CD4-positive, alpha-beta T cell (primary cell): ENCODE measurements at regions of chr19 and their contacts with region 1.

Region 1: GRCh38 chr19:57350877-57351805 is at the start of gene ZNF304:
- DNase-seq: peak; percentile 63 to 93 (median 76)
- ATAC-seq: peak; percentile 99
- H3K4me3 ChIP-seq: peak within 1 kb of the TSS; percentile 97
- H3K4me3 Mint-ChIP-seq: peak within 1 kb of the TSS; percentile 93
- H3K27ac ChIP-seq: peak within 1 kb of the TSS in 1 of 2 donors; percentile 80
- H3K27ac Mint-ChIP-seq: peak within 1 kb of the TSS; percentile 90
- H3K4me1 ChIP-seq: peaks cover 18% of the 10 kb centered on the region
- H3K4me1 Mint-ChIP-seq: peaks cover 35% of the 10 kb centered on the region
- H3K27me3 ChIP-seq: no peaks in the 10 kb centered on the region
- H3K27me3 Mint-ChIP-seq: peaks cover 9% of the 10 kb centered on the region
- CTCF ChIP-seq: no peak
- total RNA-seq, gene ZNF304: 4.9 to 5.4 TPM

Region 2: DNA sequence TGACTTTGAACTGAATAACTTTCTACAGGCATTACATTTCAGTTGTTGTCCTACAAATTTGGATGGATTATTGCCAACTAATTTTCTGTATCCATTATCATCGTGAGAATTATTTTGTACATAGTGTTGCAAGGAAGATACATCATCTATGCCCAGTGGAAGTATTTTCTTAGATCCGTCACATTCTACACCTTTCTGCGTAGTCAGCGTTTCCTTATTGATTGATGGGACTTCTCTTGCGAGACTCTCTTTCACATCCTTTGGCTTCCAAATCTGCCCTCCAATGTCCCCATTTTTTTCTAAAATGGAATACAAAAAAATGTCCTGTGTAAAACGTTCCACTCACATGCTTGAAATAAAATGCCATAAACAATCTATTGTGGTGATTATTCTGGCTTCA is 215.3 kb before region 1 on chr19:
- CTCF ChIA-PET with region 1: no interaction called
- POLR2A ChIA-PET with region 1: no interaction called
- intact Hi-C with region 1: no loop called
- DNase-seq: no peak
- ATAC-seq: no peak
- H3K4me3 ChIP-seq: no peak overlapping the region
- H3K4me3 Mint-ChIP-seq: no peak overlapping the region
- H3K27ac ChIP-seq: no peak overlapping the region
- H3K27ac Mint-ChIP-seq: no peak overlapping the region
- H3K4me1 ChIP-seq: no peaks in the 10 kb centered on the region
- H3K4me1 Mint-ChIP-seq: no peaks in the 10 kb centered on the region
- H3K27me3 ChIP-seq: no peaks in the 10 kb centered on the region
- H3K27me3 Mint-ChIP-seq: no peaks in the 10 kb centered on the region
- CTCF ChIP-seq: no peak

Region 3: GRCh38 chr19:57171551-57172081 is 179.5 kb before region 1 on chr19:
- CTCF ChIA-PET with region 1: no interaction called
- POLR2A ChIA-PET with region 1: no interaction called
- intact Hi-C with region 1: no loop called
- DNase-seq: peak in 10 of 14 experiments; percentile 11 to 66 (median 34)
- ATAC-seq: peak; percentile 73
- H3K4me3 ChIP-seq: peak overlapping the region; percentile 46
- H3K4me3 Mint-ChIP-seq: peak overlapping the region; percentile 78
- H3K27ac ChIP-seq: no peak overlapping the region
- H3K27ac Mint-ChIP-seq: peak overlapping the region; percentile 27
- H3K4me1 ChIP-seq: peaks cover 12% of the 10 kb centered on the region
- H3K4me1 Mint-ChIP-seq: peaks cover 14% of the 10 kb centered on the region
- H3K27me3 ChIP-seq: peaks cover 4 to 12% of the 10 kb centered on the region in 2 experiments
- H3K27me3 Mint-ChIP-seq: peaks cover 36% of the 10 kb centered on the region
- CTCF ChIP-seq: no peak

Region 4: DNA sequence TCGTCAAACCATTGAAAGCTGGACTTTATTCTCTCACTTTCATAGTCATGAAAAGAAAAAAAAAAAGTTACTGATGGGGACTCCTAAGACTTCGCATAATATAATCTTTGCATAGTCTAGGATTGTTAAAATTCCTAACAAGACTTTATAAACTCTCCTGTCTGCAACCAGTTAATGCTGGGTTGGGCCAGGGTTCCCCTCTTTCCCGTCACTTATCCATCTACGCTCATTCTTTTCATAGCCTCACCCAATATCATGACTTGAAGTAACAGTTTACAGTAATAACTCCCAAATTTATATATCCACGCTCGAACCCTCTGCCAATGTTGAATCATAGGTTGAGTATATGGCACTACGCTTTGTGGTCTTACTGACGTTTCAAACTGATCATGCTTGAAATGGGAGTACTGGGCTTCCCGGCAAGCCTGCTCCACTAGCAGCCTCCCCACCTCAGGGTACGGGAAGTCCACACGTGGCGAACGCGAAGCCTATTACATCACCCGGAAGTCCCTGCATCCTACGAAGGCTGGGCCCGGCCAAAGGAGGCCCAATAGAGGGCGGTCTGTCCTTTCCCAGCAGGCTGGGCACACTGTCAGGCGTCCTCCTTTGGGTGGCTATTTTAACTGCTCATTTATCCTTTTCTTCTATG is 71.6 kb before region 1 on chr19:
- CTCF ChIA-PET with region 1: no interaction called
- POLR2A ChIA-PET with region 1: no interaction called
- intact Hi-C with region 1: loop called (anchors 2 to 5 kb)
- DNase-seq: peak; percentile 59 to 93 (median 70)
- ATAC-seq: peak; percentile 66
- H3K4me3 ChIP-seq: peak overlapping the region; percentile 76
- H3K4me3 Mint-ChIP-seq: no peak overlapping the region
- H3K27ac ChIP-seq: peak overlapping the region; percentile 95 to 100
- H3K27ac Mint-ChIP-seq: no peak overlapping the region
- H3K4me1 ChIP-seq: peaks cover 42% of the 10 kb centered on the region
- H3K4me1 Mint-ChIP-seq: peaks cover 27% of the 10 kb centered on the region
- H3K27me3 ChIP-seq: no peaks in the 10 kb centered on the region
- H3K27me3 Mint-ChIP-seq: no peaks in the 10 kb centered on the region
- CTCF ChIP-seq: no peak

Region 5: GRCh38 chr19:57338877-57339276 is 12.3 kb before region 1 on chr19:
- CTCF ChIA-PET with region 1: no interaction called
- POLR2A ChIA-PET with region 1: no interaction called
- intact Hi-C with region 1: no loop called
- DNase-seq: no peak
- ATAC-seq: no peak
- H3K4me3 ChIP-seq: no peak overlapping the region
- H3K4me3 Mint-ChIP-seq: no peak overlapping the region
- H3K27ac ChIP-seq: no peak overlapping the region
- H3K27ac Mint-ChIP-seq: no peak overlapping the region
- H3K4me1 ChIP-seq: no peaks in the 10 kb centered on the region
- H3K4me1 Mint-ChIP-seq: no peaks in the 10 kb centered on the region
- H3K27me3 ChIP-seq: no peaks in the 10 kb centered on the region
- H3K27me3 Mint-ChIP-seq: no peaks in the 10 kb centered on the region
- CTCF ChIP-seq: no peak

Region 6: DNA sequence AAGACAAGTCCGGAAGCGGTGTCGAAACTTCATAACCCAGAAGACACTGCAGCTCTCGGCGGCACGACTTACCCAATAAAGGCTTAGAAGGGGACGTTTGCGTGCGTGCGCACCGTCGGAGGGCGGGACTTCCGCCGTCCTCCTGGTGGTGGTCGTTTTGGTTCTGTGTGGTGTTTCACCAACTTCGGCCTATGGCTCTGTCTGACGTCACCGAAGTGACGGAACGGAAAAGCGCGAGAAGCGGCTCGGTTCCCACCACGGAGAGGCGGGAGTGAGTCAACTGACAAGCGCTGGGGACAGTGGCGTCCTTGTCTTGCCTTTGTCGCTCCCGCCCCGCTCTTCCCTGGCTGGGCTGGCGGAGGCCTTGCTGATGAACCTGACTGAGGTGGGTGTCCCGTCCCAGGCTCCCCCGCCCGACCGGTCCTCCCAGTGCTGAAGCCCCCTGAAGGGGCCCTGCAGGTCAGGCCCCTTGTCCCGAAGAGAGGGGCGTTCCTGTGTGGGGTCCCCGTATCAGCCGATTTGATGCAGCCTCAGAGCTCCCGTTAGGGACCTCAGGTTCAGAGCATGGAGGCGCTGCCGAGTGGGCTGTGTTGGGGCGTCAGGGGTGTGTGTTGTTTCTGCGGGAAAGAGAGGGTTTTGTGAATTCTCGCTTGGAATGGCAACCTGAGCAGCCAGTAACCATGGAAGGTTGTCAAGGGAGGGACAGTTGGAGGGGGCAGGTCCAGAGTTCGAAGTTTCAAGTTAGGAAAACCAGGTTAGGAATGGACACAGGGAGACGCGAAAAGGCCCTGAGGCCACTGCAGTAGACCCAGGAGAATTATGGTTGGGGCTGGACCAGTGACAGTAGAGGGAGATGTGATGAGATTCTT is 38.8 kb after region 1 on chr19 and contains the start of gene ZNF548:
- CTCF ChIA-PET with region 1: no interaction called
- POLR2A ChIA-PET with region 1: interaction called, 12 read pairs
- intact Hi-C with region 1: no loop called
- DNase-seq: peak; percentile 87 to 99 (median 95)
- ATAC-seq: peak; percentile 96
- H3K4me3 ChIP-seq: peak within 1 kb of the TSS; percentile 86
- H3K4me3 Mint-ChIP-seq: peak within 1 kb of the TSS; percentile 98
- H3K27ac ChIP-seq: peak within 1 kb of the TSS; percentile 86 to 95
- H3K27ac Mint-ChIP-seq: peak within 1 kb of the TSS; percentile 95
- H3K4me1 ChIP-seq: peaks cover 18% of the 10 kb centered on the region
- H3K4me1 Mint-ChIP-seq: peaks cover 33% of the 10 kb centered on the region
- H3K27me3 ChIP-seq: no peaks in the 10 kb centered on the region
- H3K27me3 Mint-ChIP-seq: no peaks in the 10 kb centered on the region
- CTCF ChIP-seq: no peak
- total RNA-seq, gene ZNF548: 68.3 to 70.4 TPM